Heart right ventricle (tissue), 16 donors: ENCODE measurements at regions of chr15 and their contacts with region 1.

Region 1: DNA sequence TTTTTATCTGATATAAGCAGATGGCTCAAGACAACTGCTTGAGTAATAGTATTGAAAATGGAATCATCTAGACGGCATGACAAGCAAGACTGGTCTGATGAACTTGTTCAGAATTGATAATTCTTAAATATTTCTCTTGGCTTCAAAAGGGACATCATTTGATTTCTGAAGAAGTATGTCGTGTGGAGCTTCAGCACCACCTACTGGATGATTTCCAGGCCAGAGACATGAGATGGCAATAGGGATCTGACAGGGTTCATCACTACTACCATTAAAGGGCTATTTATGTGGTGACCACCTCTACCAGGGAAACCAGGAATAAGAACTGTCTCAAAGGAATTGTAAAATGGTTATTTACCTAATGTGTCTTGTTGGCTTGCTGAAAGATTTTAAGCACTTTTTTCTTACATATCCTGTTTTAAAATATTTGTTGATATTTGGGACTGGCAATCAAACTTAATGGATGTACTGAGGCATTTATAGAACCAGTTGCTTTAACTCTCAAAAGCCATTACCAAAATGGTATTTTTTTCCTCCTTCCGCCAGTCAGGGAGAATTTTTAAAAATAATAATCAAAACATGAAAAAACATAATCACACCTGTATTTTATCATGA is 99.5 kb upstream of the FAM98B start:
- DNase-seq: peak in 1 of 2 donors; percentile 70
- ATAC-seq: peak in 7 of 8 donors; percentile 47 to 83 (median 70)
- H3K4me3 ChIP-seq: no peak overlapping the region
- H3K27ac ChIP-seq: no peak overlapping the region
- H3K4me1 ChIP-seq: peaks cover 0 to 5% (median 0%) of the 10 kb centered on the region in 9 donors
- H3K27me3 ChIP-seq: no peaks in the 10 kb centered on the region
- CTCF ChIP-seq: peak; percentile 73 to 90 (median 82)

Region 2: DNA sequence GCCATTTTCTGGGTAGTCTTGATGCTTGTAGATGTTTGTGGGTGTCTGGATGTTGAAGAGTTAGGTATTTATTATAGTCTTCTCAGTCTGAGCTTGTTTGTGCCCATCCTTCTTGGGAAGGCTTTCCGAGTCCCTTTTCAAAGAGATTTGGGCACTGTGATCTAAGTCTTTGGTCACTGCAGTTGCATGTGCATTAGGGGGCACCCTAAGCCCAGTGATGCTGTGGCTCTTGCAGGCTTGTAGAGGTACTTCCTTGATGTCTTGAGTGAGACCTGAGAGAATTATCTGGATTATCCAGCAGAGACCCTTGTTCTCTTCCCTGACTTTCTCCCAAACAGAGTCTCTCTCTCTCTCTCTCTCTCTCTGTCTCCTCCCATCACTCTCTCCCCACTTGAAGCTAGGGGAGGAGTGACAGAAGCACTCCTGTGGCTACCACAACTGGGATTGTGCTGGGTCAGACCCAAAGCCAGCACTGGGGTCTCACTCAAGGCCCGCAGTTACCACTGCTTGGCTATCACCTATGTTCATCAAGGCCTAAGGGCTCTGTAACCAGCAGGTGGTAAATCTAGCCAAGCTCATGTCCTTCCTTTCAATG is 351.4 kb before region 1 on chr15:
- intact Hi-C with region 1: loop called in 7 of 10 experiments (anchors 2 to 5 kb)
- DNase-seq: peak; percentile 50 to 52
- ATAC-seq: peak; percentile 59 to 85 (median 74)
- H3K4me3 ChIP-seq: no peak overlapping the region
- H3K27ac ChIP-seq: no peak overlapping the region
- H3K4me1 ChIP-seq: peaks cover 0 to 17% (median 4%) of the 10 kb centered on the region in 9 donors
- H3K27me3 ChIP-seq: no peaks in the 10 kb centered on the region
- CTCF ChIP-seq: peak; percentile 23 to 71 (median 63)

Region 3: GRCh38 chr15:38129531-38130204 is 224.8 kb before region 1 on chr15:
- intact Hi-C with region 1: loop called in 1 of 10 experiments (anchors 10 kb)
- DNase-seq: peak; percentile 31 to 85
- ATAC-seq: peak; percentile 79 to 90 (median 87)
- H3K4me3 ChIP-seq: peak overlapping the region in 6 of 10 donors; percentile 25 to 38 (median 31)
- H3K27ac ChIP-seq: peak overlapping the region; percentile 36 to 90 (median 80)
- H3K4me1 ChIP-seq: peaks cover 0 to 59% (median 30%) of the 10 kb centered on the region in 9 donors
- H3K27me3 ChIP-seq: no peaks in the 10 kb centered on the region
- CTCF ChIP-seq: no peak

Region 4: GRCh38 chr15:38324939-38325647 is 29.3 kb before region 1 on chr15:
- intact Hi-C with region 1: loop called in 1 of 10 experiments (anchors 1 kb)
- DNase-seq: no peak
- ATAC-seq: no peak
- H3K4me3 ChIP-seq: no peak overlapping the region
- H3K27ac ChIP-seq: no peak overlapping the region
- H3K4me1 ChIP-seq: peaks cover 0 to 5% (median 0%) of the 10 kb centered on the region in 9 donors
- H3K27me3 ChIP-seq: no peaks in the 10 kb centered on the region
- CTCF ChIP-seq: no peak